ENCODE measurements at regions of chr10 and their contacts with region 1.

Region 1: DNA sequence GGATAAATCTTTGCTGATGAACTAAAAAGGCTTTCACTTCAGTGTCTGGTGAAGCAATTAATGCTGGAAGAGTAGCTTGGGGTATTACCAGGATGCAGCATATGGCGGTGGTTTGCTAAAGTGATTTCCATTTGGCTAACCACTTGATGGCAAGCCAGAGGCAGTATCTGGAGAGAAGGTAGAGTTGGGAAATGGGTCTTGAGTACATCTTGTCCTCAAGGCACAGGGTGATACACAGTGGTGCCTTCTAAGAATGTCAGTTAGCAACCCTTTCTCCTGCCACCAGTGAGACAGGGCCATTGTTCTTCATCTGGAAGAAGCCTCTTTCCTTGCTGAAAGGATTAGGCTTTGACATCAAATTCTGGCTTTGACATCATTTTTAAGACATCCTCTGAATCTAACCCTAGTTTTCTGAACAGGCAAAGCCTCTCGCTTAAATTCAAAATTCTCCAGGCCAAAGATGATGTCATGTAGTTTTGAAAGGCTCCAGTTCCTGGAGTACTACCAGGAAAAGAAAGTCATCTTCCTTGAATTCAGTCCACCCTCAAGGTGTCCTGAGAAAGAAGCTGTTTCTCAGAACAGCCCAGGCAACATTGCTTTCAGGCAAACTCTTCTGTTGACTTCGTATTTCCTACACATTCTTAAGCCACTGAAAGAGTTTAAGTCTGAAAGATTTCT is 162.4 kb downstream of the ARID5B start:
- DNase-seq: no peak
- ATAC-seq: no peak
- H3K4me3 Mint-ChIP-seq: no peak overlapping the region
- H3K27ac Mint-ChIP-seq: peak overlapping the region; percentile 83
- H3K4me1 Mint-ChIP-seq: peaks cover 86% of the 10 kb centered on the region
- H3K27me3 Mint-ChIP-seq: no peaks in the 10 kb centered on the region

Region 2: DNA sequence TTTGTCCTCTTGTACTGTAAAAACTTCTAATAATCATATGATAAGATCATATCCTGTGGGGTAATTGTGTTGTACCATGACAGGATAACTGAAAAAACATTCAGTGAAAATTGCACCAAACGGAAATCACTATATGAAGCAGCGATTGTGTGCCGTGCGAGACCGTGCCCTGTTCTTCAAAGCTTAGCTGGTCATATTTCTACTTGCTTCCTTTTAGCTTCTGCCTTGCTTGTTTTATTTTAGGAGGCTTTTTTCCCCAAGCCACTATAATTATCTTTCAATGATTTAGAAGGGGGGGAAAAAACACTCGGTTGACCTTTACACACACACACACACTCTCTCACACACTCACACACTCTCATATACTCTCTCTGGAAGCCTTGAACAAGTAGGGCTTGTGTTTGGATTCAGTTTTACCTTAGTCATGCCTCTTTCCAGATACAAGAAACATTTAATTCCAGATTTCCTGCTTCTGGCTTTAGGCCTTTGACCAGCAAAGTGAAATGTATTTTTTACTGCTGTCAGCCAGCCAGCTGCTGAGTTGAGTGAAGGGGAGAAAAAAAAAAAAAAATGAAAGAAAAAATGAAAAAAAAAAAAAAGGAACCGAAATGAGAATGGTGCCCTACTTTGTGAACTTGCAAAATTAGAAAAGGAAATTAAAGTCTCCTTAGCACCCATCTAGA is 18.9 kb after region 1 on chr10:
- CTCF ChIA-PET with region 1: interaction called, 4 read pairs
- POLR2A ChIA-PET with region 1: no interaction called
- intact Hi-C with region 1: loop called in 1 of 2 experiments (anchors 2 kb)
- DNase-seq: peak; percentile 71
- ATAC-seq: peak; percentile 78
- H3K4me3 Mint-ChIP-seq: peak overlapping the region; percentile 52
- H3K27ac Mint-ChIP-seq: peak overlapping the region; percentile 90
- H3K4me1 Mint-ChIP-seq: peaks cover 82% of the 10 kb centered on the region
- H3K27me3 Mint-ChIP-seq: no peaks in the 10 kb centered on the region